Panc1 (cell line): ENCODE measurements at regions of chr16 and their contacts with region 1.

Region 1: DNA sequence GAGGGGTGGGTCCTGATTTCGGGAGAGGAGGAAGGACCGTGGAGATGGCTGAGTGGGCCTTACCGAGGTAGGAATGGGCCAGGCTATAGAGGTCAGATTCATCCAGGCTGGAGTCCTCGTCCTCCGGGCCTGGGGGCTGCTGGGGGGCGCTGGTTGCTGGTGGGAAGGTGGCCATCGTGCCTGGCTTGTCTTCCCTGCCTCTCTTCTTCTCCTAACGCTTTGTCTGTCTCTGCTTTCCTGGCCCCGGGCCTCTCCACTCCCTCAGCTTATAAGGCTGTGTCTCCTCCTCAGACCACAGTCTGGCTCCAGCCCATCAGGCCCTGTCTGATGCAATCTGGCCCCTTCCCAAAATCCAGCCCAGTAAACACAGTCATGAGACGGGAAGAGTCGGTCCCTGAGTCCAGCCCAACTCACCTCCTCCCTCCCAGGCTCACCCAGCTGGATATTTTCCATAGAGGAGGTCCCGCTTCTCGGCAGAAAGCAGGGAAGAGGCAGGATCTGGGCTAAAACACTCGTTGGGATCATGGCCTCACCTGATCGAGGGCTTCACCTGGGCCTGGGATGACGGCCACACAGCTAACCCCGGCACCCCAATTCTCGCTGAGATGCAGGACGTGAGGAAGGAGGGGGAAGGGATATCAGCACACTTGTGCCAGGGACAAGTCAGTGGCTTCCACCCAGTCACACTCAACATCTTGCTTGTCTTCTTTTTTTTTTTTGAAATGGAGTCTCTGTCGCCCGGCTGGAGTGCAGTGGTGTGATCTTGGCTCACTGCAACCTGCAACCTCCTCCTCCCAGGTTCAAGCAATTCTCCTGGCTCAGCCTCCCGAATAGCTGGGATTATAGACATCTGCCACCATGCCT is at the start of gene NUPR1:
- DNase-seq: peak; percentile 75
- ATAC-seq: peak; percentile 90
- H3K4me3 ChIP-seq: peak within 1 kb of the TSS; percentile 50 to 63
- H3K27ac ChIP-seq: peak within 1 kb of the TSS; percentile 88
- H3K4me1 ChIP-seq: peaks cover 17% of the 10 kb centered on the region; the same call in 1 of the 2 replicates
- H3K27me3 ChIP-seq: no peaks in the 10 kb centered on the region
- CTCF ChIP-seq: no peak
- total RNA-seq, gene NUPR1: 79.7 TPM

Region 2: GRCh38 chr16:28499856-28500255 is 39.1 kb before region 1 on chr16:
- CTCF ChIA-PET with region 1: no interaction called
- POLR2A ChIA-PET with region 1: no interaction called
- in situ Hi-C with region 1: no loop called
- intact Hi-C with region 1: no loop called
- DNase-seq: no peak
- ATAC-seq: no peak
- H3K4me3 ChIP-seq: no peak overlapping the region
- H3K27ac ChIP-seq: no peak overlapping the region
- H3K4me1 ChIP-seq: 0 out of 2 replicates have a peak, but pooled peaks cover 3% of the 10 kb centered on the region
- H3K27me3 ChIP-seq: no peaks in the 10 kb centered on the region
- CTCF ChIP-seq: no peak

Region 3: DNA sequence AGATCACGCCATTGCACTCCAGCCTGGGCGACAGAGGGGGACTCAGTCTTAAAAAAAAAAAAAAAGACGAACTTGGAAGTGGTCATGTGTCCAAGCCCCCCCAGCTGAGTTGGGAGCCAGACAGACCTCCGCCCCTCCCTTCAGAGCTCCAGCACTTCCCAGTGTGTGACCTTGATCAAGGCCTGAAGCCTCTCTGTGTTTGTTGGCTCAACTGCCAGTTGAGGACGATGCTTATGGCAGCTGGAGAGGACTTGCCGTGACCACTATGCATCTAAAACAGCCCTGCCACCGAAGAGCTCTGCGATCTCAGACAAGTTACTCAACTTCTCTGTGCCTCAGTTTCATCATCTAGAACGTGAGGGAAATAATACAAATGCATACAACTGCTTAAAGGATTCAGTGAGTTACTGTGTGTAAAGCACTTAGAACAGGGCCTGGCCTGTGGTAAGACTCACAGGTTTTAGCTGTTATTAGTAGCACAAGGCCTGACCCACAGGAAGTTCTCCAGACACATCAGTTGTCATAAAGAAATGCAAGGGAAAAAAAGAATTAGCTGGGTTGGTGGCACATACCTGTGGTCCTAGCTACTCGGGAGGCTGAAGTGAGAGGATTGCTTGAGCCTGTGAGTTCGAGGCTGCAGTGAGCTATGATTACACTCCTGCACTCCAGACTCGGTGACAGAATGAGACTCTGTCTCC is 25.3 kb before region 1 on chr16:
- CTCF ChIA-PET with region 1: no interaction called
- POLR2A ChIA-PET with region 1: interaction called, 11 read pairs
- in situ Hi-C with region 1: no loop called
- intact Hi-C with region 1: no loop called
- DNase-seq: no peak
- ATAC-seq: peak; percentile 51
- H3K4me3 ChIP-seq: no peak overlapping the region
- H3K27ac ChIP-seq: no peak overlapping the region
- H3K4me1 ChIP-seq: no peaks in the 10 kb centered on the region
- H3K27me3 ChIP-seq: no peaks in the 10 kb centered on the region
- CTCF ChIP-seq: no peak

Region 4: DNA sequence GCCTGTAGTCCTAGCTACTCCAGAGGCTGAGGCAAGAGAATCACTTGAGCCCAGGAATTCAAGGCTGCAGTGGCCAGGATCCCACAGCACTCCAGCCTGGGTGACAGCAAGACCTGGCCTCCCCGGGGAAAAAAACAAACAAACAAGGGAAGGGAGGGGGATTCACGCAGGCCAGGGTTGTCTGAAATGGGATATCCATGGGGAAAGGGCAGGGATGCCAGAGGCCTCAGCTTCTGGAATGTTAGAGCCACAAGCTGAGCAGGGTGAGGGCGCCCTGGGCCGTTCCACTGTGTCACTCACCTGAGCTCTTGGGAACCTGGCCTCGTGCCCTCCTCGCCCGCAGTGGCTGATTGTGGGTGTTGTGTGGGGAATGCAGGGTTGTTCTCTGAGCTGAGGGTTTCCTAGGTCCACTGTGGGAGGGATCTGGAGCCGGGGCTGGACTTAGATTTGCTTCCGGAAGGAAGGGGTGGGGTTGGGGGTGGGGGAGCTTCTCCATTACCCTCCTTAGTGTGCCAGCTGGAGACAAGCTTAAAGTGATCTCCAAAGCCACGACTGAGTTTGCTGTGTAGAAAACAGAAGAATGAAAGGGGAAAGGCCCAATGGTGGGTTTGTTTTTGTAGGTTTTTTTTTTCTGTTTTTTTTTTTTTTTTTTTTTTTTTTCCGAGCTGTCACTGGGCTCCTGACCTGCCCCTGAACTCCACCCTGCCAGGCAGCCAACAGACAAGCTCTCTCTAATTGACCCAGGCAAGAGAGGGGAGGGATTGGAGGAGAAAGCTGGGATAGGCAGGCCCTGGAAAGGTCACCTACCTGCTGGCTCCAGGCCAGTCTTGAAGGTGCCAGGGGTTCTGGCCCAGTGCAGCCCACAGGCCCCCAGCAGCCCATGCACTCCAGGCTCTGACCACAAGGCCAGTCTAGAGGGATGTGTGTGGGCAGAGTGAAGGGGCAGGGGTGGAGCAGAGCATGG is 70.9 kb after region 1 on chr16 and contains the start of gene SULT1A1:
- CTCF ChIA-PET with region 1: no interaction called
- POLR2A ChIA-PET with region 1: interaction called, 21 read pairs
- in situ Hi-C with region 1: no loop called
- intact Hi-C with region 1: no loop called
- DNase-seq: no peak
- ATAC-seq: no peak
- H3K4me3 ChIP-seq: no peak within 1 kb of the TSS
- H3K27ac ChIP-seq: no peak within 1 kb of the TSS
- H3K4me1 ChIP-seq: no peaks in the 10 kb centered on the region; the same call in 1 of the 2 replicates
- H3K27me3 ChIP-seq: no peaks in the 10 kb centered on the region
- CTCF ChIP-seq: no peak
- total RNA-seq, gene SULT1A1: 1.5 TPM